Activated CD4-positive, alpha-beta T cell treated with anti-CD3 and anti-CD28 coated beads, Interleukin-2, amount 10 ng/mL, durations not matched to agents 7 days and 5 days (primary cell): ENCODE measurements at regions of chr15 and their contacts with region 1.

Region 1: GRCh38 chr15:85646538-85647091 is 148.1 kb downstream of the KLHL25 start:
- DNase-seq: peak; percentile 18
- H3K4me3 Mint-ChIP-seq: no peak overlapping the region
- H3K27ac Mint-ChIP-seq: peak overlapping the region; percentile 63
- H3K4me1 Mint-ChIP-seq: peaks cover 39% of the 10 kb centered on the region
- H3K27me3 Mint-ChIP-seq: no peaks in the 10 kb centered on the region

Region 2: DNA sequence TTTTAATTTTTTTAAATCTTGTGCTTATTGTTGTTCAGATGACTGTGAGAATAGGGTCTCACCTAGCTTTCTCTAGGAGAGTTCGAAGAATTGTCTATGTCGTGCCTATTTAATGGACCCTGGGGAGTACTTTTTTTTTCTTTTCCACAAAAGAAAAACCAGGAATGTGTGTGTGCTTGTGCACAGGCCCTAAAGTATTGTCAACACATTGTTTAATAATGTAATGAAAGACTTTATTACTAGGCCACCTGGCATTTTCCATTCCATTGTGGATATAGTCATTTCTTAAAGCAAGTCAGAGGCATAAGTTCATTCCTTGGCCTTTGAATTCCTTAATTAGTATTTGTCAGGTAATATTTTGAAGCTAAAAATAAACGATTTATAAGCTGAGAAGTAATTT is 12.2 kb after region 1 on chr15:
- CTCF ChIA-PET with region 1: interaction called, 10 read pairs
- POLR2A ChIA-PET with region 1: no interaction called
- DNase-seq: no peak
- H3K4me3 Mint-ChIP-seq: no peak overlapping the region
- H3K27ac Mint-ChIP-seq: no peak overlapping the region
- H3K4me1 Mint-ChIP-seq: no peaks in the 10 kb centered on the region
- H3K27me3 Mint-ChIP-seq: no peaks in the 10 kb centered on the region

Region 3: GRCh38 chr15:85676720-85677098 is 30.1 kb after region 1 on chr15:
- CTCF ChIA-PET with region 1: no interaction called
- POLR2A ChIA-PET with region 1: no interaction called
- DNase-seq: no peak
- H3K4me3 Mint-ChIP-seq: no peak overlapping the region
- H3K27ac Mint-ChIP-seq: no peak overlapping the region
- H3K4me1 Mint-ChIP-seq: peaks cover 7% of the 10 kb centered on the region
- H3K27me3 Mint-ChIP-seq: no peaks in the 10 kb centered on the region